ENCODE measurements at regions of chr11 and their contacts with region 1.

Region 1: GRCh38 chr11:66371627-66372415 is at the start of gene SLC29A2:
- DNase-seq: peak; percentile 98
- ATAC-seq: peak; percentile 88
- H3K4me3 Mint-ChIP-seq: peak within 1 kb of the TSS; percentile 95
- H3K27ac Mint-ChIP-seq: peak within 1 kb of the TSS; percentile 96
- H3K4me1 Mint-ChIP-seq: peaks cover 27% of the 10 kb centered on the region
- H3K27me3 Mint-ChIP-seq: no peaks in the 10 kb centered on the region
- CTCF ChIP-seq: no peak
- total RNA-seq, gene SLC29A2: 30.2 to 36.6 TPM (median 35.3 TPM) in 3 replicates

Region 2: DNA sequence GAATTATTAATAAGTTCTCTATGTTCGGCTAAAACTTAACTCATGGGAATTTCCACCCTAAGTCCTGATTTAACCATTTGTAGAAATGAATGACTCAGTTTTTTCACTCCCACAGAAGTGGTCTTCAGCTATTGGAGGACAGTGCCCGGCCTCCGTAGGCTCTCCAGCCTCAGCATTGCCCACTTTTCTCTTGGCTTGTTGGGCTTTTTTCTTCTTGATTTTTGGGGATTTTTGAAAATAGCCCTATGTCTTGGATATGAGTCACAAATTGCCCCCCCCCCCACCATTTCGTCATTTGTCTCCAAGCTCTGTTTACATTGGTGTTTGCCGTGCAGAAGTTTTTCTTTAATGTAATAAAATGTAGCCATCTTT is 235.1 kb before region 1 on chr11:
- CTCF ChIA-PET with region 1: no interaction called
- POLR2A ChIA-PET with region 1: no interaction called
- DNase-seq: no peak
- ATAC-seq: no peak
- H3K4me3 Mint-ChIP-seq: no peak overlapping the region
- H3K27ac Mint-ChIP-seq: no peak overlapping the region
- H3K4me1 Mint-ChIP-seq: peaks cover 12% of the 10 kb centered on the region
- H3K27me3 Mint-ChIP-seq: no peaks in the 10 kb centered on the region
- CTCF ChIP-seq: no peak

Region 3: GRCh38 chr11:66207876-66208275 is 163.9 kb before region 1 on chr11:
- CTCF ChIA-PET with region 1: no interaction called
- POLR2A ChIA-PET with region 1: no interaction called
- DNase-seq: no peak
- ATAC-seq: no peak
- H3K4me3 Mint-ChIP-seq: no peak overlapping the region
- H3K27ac Mint-ChIP-seq: no peak overlapping the region
- H3K4me1 Mint-ChIP-seq: no peaks in the 10 kb centered on the region
- H3K27me3 Mint-ChIP-seq: no peaks in the 10 kb centered on the region
- CTCF ChIP-seq: no peak

Region 4: GRCh38 chr11:66282468-66283386 is 89.1 kb before region 1 on chr11:
- CTCF ChIA-PET with region 1: interaction called, 11 read pairs
- POLR2A ChIA-PET with region 1: no interaction called
- DNase-seq: peak; percentile 100
- ATAC-seq: peak; percentile 79
- H3K4me3 Mint-ChIP-seq: no peak overlapping the region; the same call in 1 of the 2 replicates
- H3K27ac Mint-ChIP-seq: 0 out of 2 replicates have a peak overlapping the region, but pooled peaks have one; percentile 15
- H3K4me1 Mint-ChIP-seq: peaks cover 24% of the 10 kb centered on the region
- H3K27me3 Mint-ChIP-seq: peaks cover 22% of the 10 kb centered on the region
- CTCF ChIP-seq: peak; percentile 98